ENCODE measurements at regions of chr1 and their contacts with region 1.

Region 1: GRCh38 chr1:156625436-156626078 is 6.3 kb downstream of the HAPLN2 start:
- DNase-seq: peak; percentile 69
- CTCF ChIP-seq: peak; percentile 83

Region 2: DNA sequence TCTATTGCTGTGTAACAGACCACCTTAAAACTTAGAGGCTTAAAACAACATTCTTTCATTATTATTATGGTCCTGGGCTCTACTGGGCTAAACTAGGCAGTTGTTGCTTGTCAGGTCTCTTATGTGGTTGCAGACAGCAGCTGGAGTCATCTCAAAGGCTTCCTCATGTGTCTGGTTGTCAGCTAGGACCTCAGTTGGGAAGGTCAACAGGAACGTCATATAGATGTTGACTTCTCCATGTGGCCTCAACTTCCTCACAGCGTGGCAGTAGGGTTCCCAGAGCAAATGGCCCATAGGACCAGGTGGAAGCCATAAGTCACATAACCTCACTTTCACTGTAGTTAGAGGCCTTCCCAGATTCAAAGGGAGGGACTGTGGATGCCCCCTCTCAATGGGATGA is 109.6 kb before region 1 on chr1:
- CTCF ChIA-PET with region 1: no interaction called
- POLR2A ChIA-PET with region 1: no interaction called
- DNase-seq: no peak
- CTCF ChIP-seq: no peak

Region 3: DNA sequence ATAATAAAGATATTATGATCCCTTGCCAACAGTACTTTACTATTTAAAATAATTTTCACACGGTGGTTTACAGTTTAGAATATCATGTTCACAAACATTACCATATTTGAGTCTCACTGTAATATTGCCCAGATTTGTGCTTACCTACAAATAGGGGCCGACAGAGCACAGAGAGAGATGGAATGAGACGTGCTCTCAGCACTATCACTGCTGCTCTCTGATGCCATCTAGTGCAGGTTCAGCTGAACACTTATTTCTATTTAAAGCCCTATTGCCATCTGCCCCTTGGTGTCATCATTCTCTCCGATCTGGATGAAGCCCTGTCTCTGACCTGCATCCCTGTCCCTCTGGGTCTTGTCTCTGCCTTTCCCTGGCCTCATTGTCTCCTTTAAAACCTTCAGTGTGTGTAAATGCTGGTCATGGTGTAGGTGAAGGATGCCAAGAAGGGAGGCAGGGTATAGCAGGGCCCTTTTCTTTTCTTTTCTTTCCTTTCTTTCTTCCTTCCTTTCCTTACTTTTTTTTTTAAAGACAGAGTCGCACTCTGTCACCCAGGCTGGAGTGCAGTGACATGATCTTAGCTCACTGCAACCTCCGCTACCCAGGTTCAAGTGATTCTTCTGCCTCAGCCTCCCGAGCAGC is 17.4 kb before region 1 on chr1:
- CTCF ChIA-PET with region 1: interaction called, 91 read pairs
- POLR2A ChIA-PET with region 1: no interaction called
- DNase-seq: peak; percentile 70
- CTCF ChIP-seq: peak; percentile 74

Region 4: GRCh38 chr1:156652131-156652991 is 26.8 kb after region 1 on chr1:
- CTCF ChIA-PET with region 1: interaction called, 305 read pairs
- POLR2A ChIA-PET with region 1: no interaction called
- DNase-seq: no peak
- CTCF ChIP-seq: no peak

Region 5: DNA sequence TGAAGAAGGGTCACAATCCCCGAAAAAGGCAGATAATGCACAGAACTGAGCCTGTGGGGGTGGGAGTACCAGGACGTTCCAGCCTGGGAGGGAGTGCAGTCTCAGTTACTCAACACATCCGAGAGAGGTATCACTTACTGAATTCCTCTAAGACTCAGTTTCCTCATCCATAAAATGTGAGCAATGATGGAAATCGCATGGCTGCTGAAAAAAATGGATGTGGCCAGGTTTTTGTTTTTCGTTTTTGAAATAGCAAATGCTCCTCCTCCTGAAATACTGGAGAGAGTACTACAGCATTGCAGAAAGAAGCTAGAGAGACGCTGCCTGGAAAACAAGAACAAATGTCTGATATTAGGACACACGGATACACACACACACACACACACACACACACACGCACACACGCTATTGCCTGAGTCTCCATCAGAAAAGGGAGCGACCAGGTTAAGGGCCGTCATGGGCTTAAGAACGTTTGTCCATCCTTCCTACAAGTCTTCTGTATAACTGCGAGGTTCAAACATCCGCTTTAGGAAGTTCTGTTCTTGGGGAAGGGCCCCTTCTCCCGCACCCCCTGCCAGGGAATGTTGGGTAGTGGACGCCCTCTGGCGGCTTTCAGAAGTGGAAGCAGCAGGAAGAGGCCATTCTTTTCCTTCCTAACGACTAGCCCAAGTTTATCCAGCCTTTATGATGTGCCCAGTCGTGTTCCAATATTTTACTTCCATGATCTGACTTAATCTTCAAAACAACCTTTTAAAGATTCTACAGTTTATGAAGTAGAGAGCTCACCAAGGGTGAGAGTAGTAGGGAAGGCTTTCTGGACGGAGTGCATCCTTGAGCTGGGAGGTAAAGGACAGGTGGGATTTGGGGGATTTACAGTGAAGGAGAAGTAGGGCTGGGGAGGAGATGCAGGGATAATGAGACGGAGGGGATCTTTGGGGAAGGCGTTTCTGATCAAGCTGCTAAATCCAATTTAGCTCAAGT is 52.3 kb after region 1 on chr1:
- CTCF ChIA-PET with region 1: interaction called, 97 read pairs
- POLR2A ChIA-PET with region 1: no interaction called
- DNase-seq: peak; percentile 66
- CTCF ChIP-seq: peak; percentile 83

Region 6: DNA sequence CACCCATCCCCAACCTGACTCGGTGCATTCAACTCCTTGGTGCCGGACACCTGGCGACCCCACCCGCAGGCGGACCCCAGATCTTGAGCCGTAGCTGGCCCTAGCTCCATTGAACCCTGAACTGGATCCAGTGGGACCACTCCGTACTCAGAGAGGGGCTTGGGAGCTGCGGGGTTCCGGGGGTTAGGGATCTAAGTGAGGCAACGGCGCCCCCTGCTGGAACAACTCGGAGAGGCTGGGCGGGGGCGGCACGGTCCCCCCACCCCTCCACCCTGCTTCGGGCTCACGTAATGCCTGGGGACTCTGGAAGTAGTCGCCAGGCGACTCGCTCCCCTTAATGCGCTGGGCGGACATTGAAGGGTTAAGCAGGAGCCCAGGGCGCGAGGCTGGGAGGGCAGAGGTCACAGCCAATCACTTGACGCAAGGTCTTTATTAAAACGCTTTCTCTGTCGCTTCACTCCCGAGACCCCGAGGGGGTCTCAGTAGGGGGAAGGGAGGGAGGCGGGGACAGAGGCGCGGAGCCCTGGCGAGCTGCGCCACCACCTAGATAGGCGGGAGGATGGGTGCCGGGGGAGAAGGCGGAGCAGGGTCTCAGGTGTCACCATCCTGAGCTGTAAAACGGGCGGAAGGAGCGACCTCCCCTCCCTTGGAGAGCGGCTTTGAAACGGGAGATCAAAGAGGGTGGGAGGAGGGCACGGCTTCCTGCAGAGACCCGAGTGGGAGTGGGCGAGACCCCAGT is 80.5 kb after region 1 on chr1:
- CTCF ChIA-PET with region 1: interaction called, 36 read pairs
- POLR2A ChIA-PET with region 1: no interaction called
- DNase-seq: peak; percentile 88
- CTCF ChIP-seq: peak; percentile 67